Activated naive CD4-positive, alpha-beta T cell treated with anti-CD3 and anti-CD28 coated beads for 36 hours (primary cell): ENCODE measurements at regions of chr19 and their contacts with region 1.

Region 1: DNA sequence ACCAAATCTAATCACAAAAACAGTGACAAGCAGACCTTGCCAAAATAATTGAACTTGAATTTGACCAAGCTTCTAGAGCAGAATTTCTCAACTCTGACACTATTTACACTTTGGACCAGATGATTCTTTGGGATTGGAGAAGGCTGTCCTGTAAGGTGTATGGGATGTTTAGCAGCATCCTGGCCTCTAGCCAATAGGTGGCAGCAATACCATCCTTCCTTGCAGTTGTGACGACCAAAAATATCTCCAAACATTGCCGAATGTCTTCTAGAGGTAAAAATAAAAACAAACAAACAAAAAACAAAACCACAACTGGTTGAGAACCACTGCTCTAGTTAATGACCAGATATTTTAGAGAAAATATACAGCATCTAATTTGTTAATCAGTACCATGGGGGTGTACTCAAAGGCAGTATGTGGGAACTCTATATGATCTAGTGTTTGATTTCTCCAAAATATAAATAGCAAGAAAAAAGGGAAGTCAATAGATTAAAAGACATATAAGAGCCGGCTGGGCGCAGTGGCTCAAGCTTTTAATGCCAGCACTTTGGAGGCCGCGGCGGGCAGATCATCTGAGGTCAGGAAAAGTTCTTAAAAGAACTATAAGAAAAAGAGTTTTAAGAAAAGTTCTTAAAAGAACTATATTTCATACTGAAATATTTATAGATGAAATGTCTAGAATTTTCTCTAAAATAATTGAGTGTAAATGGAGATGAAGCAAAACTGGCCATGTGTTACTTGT is 60.9 kb upstream of the ZNF527 start:
- DNase-seq: peak; percentile 48
- H3K4me3 Mint-ChIP-seq: no peak overlapping the region
- H3K27ac Mint-ChIP-seq: no peak overlapping the region
- H3K4me1 Mint-ChIP-seq: peaks cover 9% of the 10 kb centered on the region
- H3K27me3 Mint-ChIP-seq: peaks cover 14% of the 10 kb centered on the region

Region 2: GRCh38 chr19:37172368-37173366 is 137.3 kb before region 1 on chr19 and contains the start of gene ZNF585A:
- CTCF ChIA-PET with region 1: no interaction called
- intact Hi-C with region 1: loop called (anchors 10 kb)
- DNase-seq: peak; percentile 92
- H3K4me3 Mint-ChIP-seq: no peak within 1 kb of the TSS
- H3K27ac Mint-ChIP-seq: no peak within 1 kb of the TSS
- H3K4me1 Mint-ChIP-seq: no peaks in the 10 kb centered on the region
- H3K27me3 Mint-ChIP-seq: no peaks in the 10 kb centered on the region
- total RNA-seq, gene ZNF585A: 8.9 to 9.1 TPM

Region 3: GRCh38 chr19:37217855-37218591 is 92.0 kb before region 1 on chr19 and contains the start of gene ZNF383:
- CTCF ChIA-PET with region 1: no interaction called
- intact Hi-C with region 1: loop called (anchors 10 kb)
- DNase-seq: peak; percentile 87
- H3K4me3 Mint-ChIP-seq: peak within 1 kb of the TSS; percentile 88
- H3K27ac Mint-ChIP-seq: peak within 1 kb of the TSS; percentile 92
- H3K4me1 Mint-ChIP-seq: peaks cover 16% of the 10 kb centered on the region
- H3K27me3 Mint-ChIP-seq: no peaks in the 10 kb centered on the region
- total RNA-seq, gene ZNF383: 8.4 to 9.1 TPM

Region 4: GRCh38 chr19:37551129-37551993 is 241.4 kb after region 1 on chr19:
- CTCF ChIA-PET with region 1: no interaction called
- intact Hi-C with region 1: loop called (anchors 10 kb)
- DNase-seq: peak; percentile 58
- H3K4me3 Mint-ChIP-seq: peak overlapping the region; percentile 76
- H3K27ac Mint-ChIP-seq: no peak overlapping the region
- H3K4me1 Mint-ChIP-seq: peaks cover 6% of the 10 kb centered on the region
- H3K27me3 Mint-ChIP-seq: peaks cover 2% of the 10 kb centered on the region

Region 5: DNA sequence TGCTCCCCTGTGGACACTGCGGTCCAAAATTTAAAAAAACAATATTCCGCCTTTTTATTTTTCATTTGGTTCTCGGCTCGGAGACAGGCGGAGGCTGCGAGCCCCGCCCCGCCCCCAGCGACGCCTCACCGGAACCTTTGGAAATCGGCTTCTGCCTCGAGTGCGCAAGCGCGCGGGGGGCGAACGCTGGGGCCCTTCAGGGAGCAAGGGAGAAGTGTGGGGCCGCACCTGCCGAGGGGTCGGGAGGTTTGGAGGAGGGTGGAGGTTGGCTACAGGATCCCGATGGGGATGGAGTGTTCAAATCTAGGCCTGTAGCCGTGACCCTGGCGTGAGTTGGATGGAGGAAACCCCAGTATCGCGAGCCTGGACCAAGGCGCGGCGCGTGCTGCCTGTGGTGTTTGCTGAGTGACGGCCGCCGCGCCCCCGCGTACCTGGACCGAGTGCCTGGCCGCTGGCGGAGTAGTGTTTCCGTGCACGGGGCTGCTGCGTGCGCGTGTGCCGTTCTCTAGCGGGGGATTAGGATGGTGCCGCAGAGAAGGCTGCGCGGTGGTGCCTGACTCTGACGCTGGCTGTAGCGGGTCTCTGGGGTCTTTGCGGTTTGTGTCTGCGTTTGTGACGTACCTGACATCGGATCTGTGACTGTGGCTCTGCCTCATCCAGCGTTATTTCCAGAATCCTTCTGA is 345.8 kb after region 1 on chr19:
- CTCF ChIA-PET with region 1: no interaction called
- intact Hi-C with region 1: loop called (anchors 10 kb)
- DNase-seq: peak; percentile 87
- H3K4me3 Mint-ChIP-seq: peak overlapping the region; percentile 93
- H3K27ac Mint-ChIP-seq: peak overlapping the region; percentile 93
- H3K4me1 Mint-ChIP-seq: peaks cover 29% of the 10 kb centered on the region
- H3K27me3 Mint-ChIP-seq: no peaks in the 10 kb centered on the region

Region 6: DNA sequence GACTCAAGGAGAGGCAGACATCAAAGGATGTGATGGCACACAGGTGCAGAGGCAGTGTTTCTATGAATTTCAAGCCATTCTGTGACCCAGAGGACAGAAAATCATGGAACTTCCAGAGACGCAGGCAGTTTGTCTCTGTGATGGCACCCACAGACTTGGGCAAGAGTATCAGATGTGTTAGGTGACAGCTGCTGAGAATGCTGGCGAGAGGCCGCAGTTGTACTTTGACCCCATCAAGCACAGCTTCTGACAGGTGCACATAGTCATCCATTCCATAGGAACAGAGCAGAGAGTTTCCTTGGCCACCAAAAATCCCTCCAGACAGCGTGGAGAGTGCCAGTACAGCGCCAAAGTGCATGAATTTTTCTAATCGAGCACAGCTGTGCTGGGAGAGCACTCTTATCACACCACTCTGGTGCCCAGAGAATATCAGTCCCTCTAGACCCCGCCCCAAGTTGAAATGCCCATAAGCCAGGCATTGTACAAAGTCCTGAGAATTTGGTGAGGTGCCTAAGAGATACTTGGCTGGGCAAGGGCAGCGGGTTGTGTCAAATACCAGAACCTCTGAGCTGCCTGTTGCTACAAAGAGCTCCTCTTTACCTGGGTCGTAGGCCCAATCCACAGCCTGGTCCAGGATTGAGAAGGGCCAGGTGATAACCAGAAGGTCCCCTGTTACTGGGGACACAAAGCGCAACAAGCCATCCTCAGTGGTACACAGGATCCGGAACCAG is 584.0 kb after region 1 on chr19:
- CTCF ChIA-PET with region 1: no interaction called
- intact Hi-C with region 1: loop called (anchors 10 kb)
- DNase-seq: no peak
- H3K4me3 Mint-ChIP-seq: no peak overlapping the region
- H3K27ac Mint-ChIP-seq: no peak overlapping the region
- H3K4me1 Mint-ChIP-seq: peaks cover 2% of the 10 kb centered on the region
- H3K27me3 Mint-ChIP-seq: peaks cover 9% of the 10 kb centered on the region

Region 7: DNA sequence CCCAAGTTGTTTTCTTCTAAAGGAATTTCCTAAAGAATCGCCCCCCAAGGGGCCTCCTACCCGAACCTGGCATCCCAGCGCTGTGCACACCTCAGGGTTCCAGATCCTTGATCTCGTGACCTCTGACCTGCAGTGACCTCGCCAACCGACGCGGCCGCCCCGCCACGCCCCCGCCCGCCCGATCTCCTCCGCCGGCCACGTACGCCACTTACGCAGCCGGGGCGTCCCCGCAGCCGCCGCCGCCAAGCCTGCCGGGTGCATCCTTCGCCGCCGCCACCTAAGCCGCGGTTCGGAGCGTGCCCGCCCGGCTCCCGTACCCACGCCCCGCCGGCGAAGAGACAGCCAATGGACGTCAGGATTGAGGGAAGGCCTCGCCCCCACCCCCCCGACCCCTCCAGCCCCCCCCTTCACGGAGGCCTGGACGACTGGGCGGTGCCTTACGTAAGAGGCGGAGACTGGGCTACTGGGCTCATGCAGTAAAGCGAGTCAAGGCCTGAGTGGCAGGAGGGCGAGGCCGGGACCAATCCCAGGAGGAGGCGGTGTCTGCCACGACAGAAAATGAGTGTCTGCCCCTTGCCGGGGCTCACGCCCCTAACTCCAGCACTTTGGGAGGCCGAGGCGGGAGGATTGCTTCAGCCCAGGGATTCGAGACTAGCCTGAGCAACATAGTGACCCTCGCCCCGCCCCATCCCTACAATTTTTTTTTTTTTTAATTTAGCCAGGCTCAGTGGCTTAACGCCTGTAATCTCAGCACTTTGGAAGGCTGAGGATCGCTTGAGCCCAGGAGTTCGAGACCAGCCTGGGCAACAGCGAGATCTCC is 1005.9 kb after region 1 on chr19 and contains the start of gene YIF1B:
- CTCF ChIA-PET with region 1: no interaction called
- intact Hi-C with region 1: loop called (anchors 10 kb)
- DNase-seq: peak; percentile 98
- H3K4me3 Mint-ChIP-seq: peak within 1 kb of the TSS; percentile 89
- H3K27ac Mint-ChIP-seq: peak within 1 kb of the TSS; percentile 92
- H3K4me1 Mint-ChIP-seq: peaks cover 50% of the 10 kb centered on the region
- H3K27me3 Mint-ChIP-seq: no peaks in the 10 kb centered on the region
- total RNA-seq, gene YIF1B: 56.0 to 61.1 TPM